ENCODE measurements at regions of chr7 and their contacts with region 1.

Region 1: GRCh38 chr7:95246831-95247370 is 77.4 kb downstream of the PON1 start:
- DNase-seq: peak in 8 of 10 donors; percentile 35 to 78 (median 46)
- H3K4me3 ChIP-seq: peak overlapping the region in 49 of 59 donors; percentile 7 to 59 (median 35)
- H3K27ac ChIP-seq: peak overlapping the region in 9 of 59 donors; percentile 8 to 63 (median 29)
- H3K27me3 ChIP-seq: no peaks in the 10 kb centered on the region
- CTCF ChIP-seq: peak; percentile 65 to 91 (median 83)

Region 2: GRCh38 chr7:94509879-94510581 is 736.9 kb before region 1 on chr7:
- intact Hi-C with region 1: loop called in 1 of 2 experiments (anchors 10 kb)
- DNase-seq: peak; percentile 51 to 80 (median 62)
- H3K4me3 ChIP-seq: peak overlapping the region; percentile 66 to 97 (median 88)
- H3K27ac ChIP-seq: peak overlapping the region; percentile 84 to 99 (median 96)
- H3K27me3 ChIP-seq: no peaks in the 10 kb centered on the region
- CTCF ChIP-seq: peak in 44 of 56 donors; percentile 7 to 65 (median 33)

Region 3: DNA sequence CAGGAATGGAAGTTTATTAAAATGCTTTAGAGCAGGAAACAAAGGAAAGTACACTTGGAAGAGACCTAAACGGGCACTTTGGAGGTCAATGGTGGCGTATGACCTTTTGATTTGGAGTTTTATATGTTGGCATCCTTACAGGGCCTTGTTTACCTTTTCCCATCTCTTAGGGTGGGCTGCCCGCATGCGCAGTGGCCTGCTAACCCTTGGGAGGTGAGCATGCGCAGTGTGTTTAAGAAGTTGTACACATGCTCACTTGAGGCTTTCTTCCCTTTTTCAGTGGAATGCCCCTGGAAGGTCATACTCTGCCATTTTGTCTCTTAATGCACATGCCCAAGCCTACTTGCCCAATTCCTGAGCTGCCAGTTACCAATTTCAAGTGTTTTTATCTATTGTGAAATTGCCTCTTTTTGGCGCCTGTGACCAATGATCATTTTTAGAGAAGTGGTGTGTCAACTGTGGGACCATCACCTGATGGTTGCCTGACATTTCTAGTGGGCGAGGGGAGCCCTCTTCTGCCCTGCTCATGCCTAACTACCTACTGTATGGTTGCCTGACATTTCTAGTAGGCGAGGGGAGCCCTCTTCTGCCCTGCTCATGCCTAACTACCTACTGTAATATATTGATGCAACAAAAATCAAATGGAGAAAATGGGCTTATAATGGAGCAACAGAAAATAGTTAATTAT is 201.5 kb before region 1 on chr7:
- intact Hi-C with region 1: loop called in 1 of 2 experiments (anchors 5 kb)
- DNase-seq: peak in 7 of 10 donors; percentile 25 to 80 (median 58)
- H3K4me3 ChIP-seq: no peak overlapping the region
- H3K27ac ChIP-seq: peak overlapping the region in 22 of 59 donors; percentile 22 to 96 (median 90)
- H3K27me3 ChIP-seq: no peaks in the 10 kb centered on the region
- CTCF ChIP-seq: peak in 52 of 56 donors; percentile 17 to 73 (median 45)

Region 4: GRCh38 chr7:95199779-95200558 is 46.9 kb before region 1 on chr7:
- intact Hi-C with region 1: loop called in 1 of 2 experiments (anchors 2 kb)
- DNase-seq: peak in 9 of 10 donors; percentile 43 to 80 (median 52)
- H3K4me3 ChIP-seq: no peak overlapping the region
- H3K27ac ChIP-seq: peak overlapping the region in 29 of 59 donors; percentile 1 to 67 (median 36)
- H3K27me3 ChIP-seq: no peaks in the 10 kb centered on the region
- CTCF ChIP-seq: peak; percentile 28 to 89 (median 78)

Region 5: DNA sequence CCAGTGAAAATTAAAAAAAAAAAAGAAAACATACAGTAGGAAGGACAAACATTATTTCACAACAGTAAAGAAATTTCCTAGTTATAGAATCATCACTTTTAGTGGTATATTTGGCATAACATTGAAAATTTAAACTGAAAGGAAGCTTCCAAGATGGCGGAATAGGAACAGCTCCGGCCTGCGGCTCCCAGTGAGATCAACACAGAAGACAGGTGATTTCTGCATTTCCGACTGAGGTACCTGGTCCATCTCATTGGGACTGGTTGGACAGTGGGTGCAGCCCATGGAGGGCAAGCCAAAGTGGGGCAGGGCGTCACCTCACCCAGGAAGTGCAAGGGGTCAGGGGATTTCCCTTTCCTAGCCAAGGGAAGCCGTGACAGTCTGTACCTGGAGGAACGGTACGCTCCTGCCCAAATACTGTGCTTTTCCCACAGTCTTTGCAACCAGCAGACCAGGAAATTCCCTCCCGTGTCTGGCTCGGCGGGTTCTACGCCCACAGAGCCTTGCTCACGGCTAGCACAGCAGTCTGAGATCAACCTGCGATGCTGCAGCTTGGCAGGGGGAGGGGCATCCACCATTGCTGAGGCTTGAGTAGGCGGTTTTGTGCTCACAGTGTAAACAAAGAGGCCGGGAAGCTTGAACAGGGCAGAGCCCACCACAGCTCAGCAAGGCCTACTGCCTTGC is 129.9 kb after region 1 on chr7:
- intact Hi-C with region 1: no loop called
- DNase-seq: no peak
- H3K4me3 ChIP-seq: no peak overlapping the region
- H3K27ac ChIP-seq: no peak overlapping the region
- H3K27me3 ChIP-seq: peaks cover 0 to 3% (median 0%) of the 10 kb centered on the region in 45 donors
- CTCF ChIP-seq: no peak

Region 6: GRCh38 chr7:95476904-95477594 is 230.1 kb after region 1 on chr7:
- intact Hi-C with region 1: loop called in 1 of 2 experiments (anchors 5 kb)
- DNase-seq: peak in 9 of 10 donors; percentile 23 to 86 (median 58)
- H3K4me3 ChIP-seq: peak overlapping the region in 22 of 59 donors; percentile 1 to 61 (median 16)
- H3K27ac ChIP-seq: peak overlapping the region in 4 of 59 donors; percentile 3 to 21 (median 20)
- H3K27me3 ChIP-seq: no peaks in the 10 kb centered on the region
- CTCF ChIP-seq: peak; percentile 77 to 99 (median 90)

Measured in dorsolateral prefrontal cortex (tissue), 120 donors.